CD8-positive, alpha-beta memory T cell (primary cell): ENCODE measurements at regions of chr11 and their contacts with region 1.

Region 1: GRCh38 chr11:66386171-66387069 is 14.9 kb upstream of the SLC29A2 start:
- DNase-seq: peak; percentile 64 to 85 (median 70)
- H3K4me3 ChIP-seq: peak overlapping the region; percentile 31
- H3K4me3 Mint-ChIP-seq: peak overlapping the region in 4 of 7 donors; percentile 0 to 33 (median 21)
- H3K27ac ChIP-seq: no peak overlapping the region
- H3K27ac Mint-ChIP-seq: peak overlapping the region in 3 of 8 donors; percentile 14 to 77 (median 56)
- H3K4me1 ChIP-seq: peaks cover 7% of the 10 kb centered on the region
- H3K4me1 Mint-ChIP-seq: peaks cover 7 to 8% (median 7%) of the 10 kb centered on the region in 3 donors
- H3K27me3 ChIP-seq: no peaks in the 10 kb centered on the region
- H3K27me3 Mint-ChIP-seq: peaks cover 0 to 4% of the 10 kb centered on the region in 2 donors

Region 2: GRCh38 chr11:66336234-66337102 is 50.0 kb before region 1 on chr11 and contains the start of gene RIN1:
- CTCF ChIA-PET with region 1: interaction called, 17 read pairs
- POLR2A ChIA-PET with region 1: no interaction called
- DNase-seq: peak; percentile 24 to 75 (median 57)
- H3K4me3 ChIP-seq: peak within 1 kb of the TSS; percentile 39
- H3K4me3 Mint-ChIP-seq: peak within 1 kb of the TSS; percentile 65 to 87 (median 78)
- H3K27ac ChIP-seq: peak within 1 kb of the TSS; percentile 6
- H3K27ac Mint-ChIP-seq: peak within 1 kb of the TSS; percentile 70 to 96 (median 82)
- H3K4me1 ChIP-seq: peaks cover 18% of the 10 kb centered on the region
- H3K4me1 Mint-ChIP-seq: peaks cover 12 to 30% (median 18%) of the 10 kb centered on the region in 3 donors
- H3K27me3 ChIP-seq: no peaks in the 10 kb centered on the region
- H3K27me3 Mint-ChIP-seq: peaks cover 0 to 1% of the 10 kb centered on the region in 2 donors
- total RNA-seq, gene RIN1: 1.5 to 1.7 TPM

Region 3: GRCh38 chr11:66344550-66345315 is 41.7 kb before region 1 on chr11 and contains the start of gene BRMS1:
- CTCF ChIA-PET with region 1: interaction called, 12 read pairs
- POLR2A ChIA-PET with region 1: no interaction called
- DNase-seq: peak; percentile 92 to 98 (median 94)
- H3K4me3 ChIP-seq: peak within 1 kb of the TSS; percentile 96
- H3K4me3 Mint-ChIP-seq: peak within 1 kb of the TSS; percentile 96 to 100 (median 97)
- H3K27ac ChIP-seq: peak within 1 kb of the TSS; percentile 92
- H3K27ac Mint-ChIP-seq: peak within 1 kb of the TSS; percentile 96 to 99 (median 98)
- H3K4me1 ChIP-seq: peaks cover 45% of the 10 kb centered on the region
- H3K4me1 Mint-ChIP-seq: peaks cover 43 to 65% (median 50%) of the 10 kb centered on the region in 3 donors
- H3K27me3 ChIP-seq: no peaks in the 10 kb centered on the region
- H3K27me3 Mint-ChIP-seq: peaks cover 0 to 10% of the 10 kb centered on the region in 2 donors
- total RNA-seq, gene BRMS1: 66.1 to 66.5 TPM

Region 4: GRCh38 chr11:66363805-66364535 is 22.4 kb before region 1 on chr11:
- CTCF ChIA-PET with region 1: interaction called, 15 read pairs
- POLR2A ChIA-PET with region 1: no interaction called
- DNase-seq: peak; percentile 36 to 71 (median 55)
- H3K4me3 ChIP-seq: no peak overlapping the region
- H3K4me3 Mint-ChIP-seq: no peak overlapping the region
- H3K27ac ChIP-seq: no peak overlapping the region
- H3K27ac Mint-ChIP-seq: no peak overlapping the region
- H3K4me1 ChIP-seq: no peaks in the 10 kb centered on the region
- H3K4me1 Mint-ChIP-seq: peaks cover 0 to 2% (median 0%) of the 10 kb centered on the region in 3 donors
- H3K27me3 ChIP-seq: no peaks in the 10 kb centered on the region
- H3K27me3 Mint-ChIP-seq: no peaks in the 10 kb centered on the region

Region 5: GRCh38 chr11:66371627-66372415 is 14.6 kb before region 1 on chr11 and contains the start of gene SLC29A2:
- CTCF ChIA-PET with region 1: interaction called, 27 read pairs
- POLR2A ChIA-PET with region 1: interaction called, 5 read pairs
- DNase-seq: peak; percentile 68 to 86 (median 74)
- H3K4me3 ChIP-seq: peak within 1 kb of the TSS; percentile 66
- H3K4me3 Mint-ChIP-seq: peak within 1 kb of the TSS; percentile 85 to 95 (median 90)
- H3K27ac ChIP-seq: peak within 1 kb of the TSS; percentile 72
- H3K27ac Mint-ChIP-seq: peak within 1 kb of the TSS; percentile 78 to 95 (median 90)
- H3K4me1 ChIP-seq: peaks cover 7% of the 10 kb centered on the region
- H3K4me1 Mint-ChIP-seq: peaks cover 10 to 19% (median 19%) of the 10 kb centered on the region in 3 donors
- H3K27me3 ChIP-seq: no peaks in the 10 kb centered on the region
- H3K27me3 Mint-ChIP-seq: peaks cover 0 to 3% of the 10 kb centered on the region in 2 donors
- total RNA-seq, gene SLC29A2: 7.9 to 8.5 TPM

Region 6: DNA sequence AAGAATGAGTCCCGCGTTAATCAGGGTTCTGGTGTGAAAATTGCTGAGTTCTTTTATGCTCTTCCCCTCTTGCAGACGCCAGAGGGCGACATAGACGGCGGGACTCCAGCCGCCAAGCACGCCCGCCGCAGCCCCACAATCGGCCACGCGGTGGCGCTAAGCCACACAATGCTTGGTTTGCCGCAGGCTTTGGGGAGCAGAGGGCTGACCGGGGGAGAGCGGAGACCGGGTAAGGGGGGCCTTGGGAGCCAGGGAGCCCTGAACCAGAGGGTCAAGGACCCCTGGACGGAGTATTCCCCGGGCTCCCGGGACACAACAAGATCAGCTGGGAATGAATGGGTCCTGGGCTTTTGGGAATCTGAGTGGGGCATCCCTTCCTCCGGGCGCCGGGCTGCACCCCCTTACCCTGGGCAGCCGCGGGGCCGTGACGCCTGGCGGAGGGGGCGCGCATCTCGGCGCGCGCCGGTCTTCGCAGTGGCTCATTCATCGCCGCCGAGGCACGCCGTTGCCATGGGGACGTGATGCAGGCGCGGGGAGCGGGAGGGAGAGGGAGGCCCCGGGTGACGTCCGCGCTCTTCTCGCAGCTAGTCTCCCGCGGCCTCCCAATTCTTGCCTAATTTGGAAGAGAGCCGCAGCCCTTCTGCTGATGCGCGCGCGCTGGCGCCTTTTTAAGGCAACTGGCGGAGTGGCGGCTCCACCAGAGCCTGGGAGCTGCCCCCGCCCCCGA is 22.2 kb after region 1 on chr11:
- CTCF ChIA-PET with region 1: interaction called, 15 read pairs
- POLR2A ChIA-PET with region 1: no interaction called
- DNase-seq: peak; percentile 82 to 92 (median 90)
- H3K4me3 ChIP-seq: peak overlapping the region; percentile 61
- H3K4me3 Mint-ChIP-seq: peak overlapping the region; percentile 21 to 90 (median 81)
- H3K27ac ChIP-seq: no peak overlapping the region
- H3K27ac Mint-ChIP-seq: peak overlapping the region in 5 of 8 donors; percentile 34 to 83 (median 64)
- H3K4me1 ChIP-seq: peaks cover 3% of the 10 kb centered on the region
- H3K4me1 Mint-ChIP-seq: peaks cover 2 to 5% (median 4%) of the 10 kb centered on the region in 3 donors
- H3K27me3 ChIP-seq: peaks cover 9% of the 10 kb centered on the region
- H3K27me3 Mint-ChIP-seq: peaks cover 24 to 52% of the 10 kb centered on the region in 2 donors

Region 7: GRCh38 chr11:66459138-66459778 is 72.8 kb after region 1 on chr11:
- CTCF ChIA-PET with region 1: no interaction called
- POLR2A ChIA-PET with region 1: no interaction called
- DNase-seq: no peak
- H3K4me3 ChIP-seq: no peak overlapping the region
- H3K4me3 Mint-ChIP-seq: peak overlapping the region in 1 of 7 donors; percentile 28
- H3K27ac ChIP-seq: no peak overlapping the region
- H3K27ac Mint-ChIP-seq: no peak overlapping the region
- H3K4me1 ChIP-seq: peaks cover 6% of the 10 kb centered on the region
- H3K4me1 Mint-ChIP-seq: peaks cover 6 to 10% (median 10%) of the 10 kb centered on the region in 3 donors
- H3K27me3 ChIP-seq: no peaks in the 10 kb centered on the region
- H3K27me3 Mint-ChIP-seq: peaks cover 0 to 2% of the 10 kb centered on the region in 2 donors